ENCODE measurements at regions of chr11 and their contacts with region 1.

Region 1: DNA sequence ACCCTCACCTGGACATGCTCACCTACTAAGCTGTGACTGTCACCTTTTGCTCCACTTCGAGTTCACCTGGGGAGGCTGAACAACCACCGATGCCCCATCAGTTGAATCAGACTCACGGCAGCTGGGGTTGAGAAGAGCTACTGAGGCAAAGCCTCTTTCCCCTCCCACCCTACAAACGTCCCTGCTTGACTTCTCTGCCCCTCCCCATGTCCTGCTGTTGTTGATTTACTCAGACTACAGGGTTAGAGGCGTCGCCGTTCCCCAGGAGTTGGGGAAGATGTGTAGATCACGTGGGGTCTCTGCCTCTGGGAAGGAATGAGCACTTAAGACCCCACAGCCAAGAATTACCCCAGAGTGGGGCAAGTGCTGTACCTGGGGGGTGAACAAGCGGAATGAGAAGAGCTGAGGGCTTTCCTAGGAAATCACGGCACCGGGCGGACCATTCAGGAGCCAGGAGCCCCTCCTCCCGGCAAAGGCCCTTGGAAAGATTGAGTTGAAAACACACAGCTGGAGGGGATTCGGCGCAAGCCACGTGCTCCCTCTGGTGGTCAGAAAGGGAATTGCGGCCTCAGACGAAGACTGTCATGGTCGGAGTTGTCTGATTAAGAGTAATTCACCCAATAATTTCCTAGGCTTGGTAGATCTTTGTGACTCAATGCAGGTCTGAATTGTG is 7.0 kb downstream of the FXYD2 start:
- DNase-seq: peak; percentile 83
- H3K4me3 ChIP-seq: peak overlapping the region in 1 of 2 experiments; percentile 33; a peak in 1 of 4 replicates
- H3K27ac ChIP-seq: no peak overlapping the region
- H3K4me1 ChIP-seq: peaks cover 8 to 28% of the 10 kb centered on the region in 2 experiments; a peak in 2 of 4 replicates
- H3K27me3 ChIP-seq: no peaks in the 10 kb centered on the region
- CTCF ChIP-seq: peak; percentile 98
- EP300 ChIP-seq: no peak
- RAD21 ChIP-seq: peak; percentile 92

Region 2: DNA sequence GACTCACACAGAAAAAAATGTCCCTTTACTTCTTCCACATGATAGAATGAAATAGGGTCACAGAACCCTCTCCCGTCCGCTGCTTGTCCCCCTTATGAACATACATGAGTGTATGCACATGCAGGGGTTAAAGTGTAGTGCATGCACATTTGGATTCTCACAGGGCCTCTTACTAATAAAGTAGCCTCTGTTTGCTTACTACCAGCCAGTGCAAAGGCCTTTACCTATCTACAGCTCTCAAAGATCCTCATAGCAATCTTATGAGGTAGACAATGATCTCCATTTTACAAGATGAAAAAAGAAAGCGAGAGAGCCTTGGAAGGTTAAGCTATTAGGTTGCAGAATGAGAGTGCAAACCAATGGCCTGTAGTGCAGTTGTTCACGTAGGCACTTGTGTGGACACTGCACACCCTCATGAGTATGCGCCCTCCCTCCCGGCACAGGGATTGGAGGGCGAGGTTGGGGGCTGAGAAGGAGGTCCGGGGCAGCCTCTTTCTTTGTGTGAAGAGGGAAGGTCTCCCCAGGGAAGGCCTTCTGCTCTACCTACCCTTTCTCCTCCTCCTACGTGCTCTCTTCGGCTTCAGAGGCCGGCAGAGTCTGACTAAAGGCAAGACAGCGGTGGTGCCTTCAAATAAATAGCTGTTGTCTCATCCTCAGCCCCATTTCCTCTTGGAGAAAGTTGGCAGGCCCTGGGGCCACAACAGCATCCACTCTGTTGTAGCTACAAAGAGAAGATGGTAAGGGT is 398.6 kb before region 1 on chr11:
- CTCF ChIA-PET with region 1: interaction called, 431 read pairs
- POLR2A ChIA-PET with region 1: no interaction called
- DNase-seq: no peak
- H3K4me3 ChIP-seq: no peak overlapping the region
- H3K27ac ChIP-seq: no peak overlapping the region
- H3K4me1 ChIP-seq: no peaks in the 10 kb centered on the region
- H3K27me3 ChIP-seq: no peaks in the 10 kb centered on the region
- CTCF ChIP-seq: no peak
- EP300 ChIP-seq: no peak
- RAD21 ChIP-seq: no peak

Region 3: GRCh38 chr11:117560780-117561530 is 256.5 kb before region 1 on chr11:
- CTCF ChIA-PET with region 1: interaction called, 11 read pairs
- POLR2A ChIA-PET with region 1: no interaction called
- DNase-seq: no peak
- H3K4me3 ChIP-seq: no peak overlapping the region
- H3K27ac ChIP-seq: no peak overlapping the region
- H3K4me1 ChIP-seq: peaks cover 0 to 19% of the 10 kb centered on the region in 2 experiments; a peak in 2 of 4 replicates
- H3K27me3 ChIP-seq: peaks cover 8% of the 10 kb centered on the region; the same call in 1 of the 2 replicates
- CTCF ChIP-seq: no peak
- EP300 ChIP-seq: no peak
- RAD21 ChIP-seq: no peak

Region 4: GRCh38 chr11:117796872-117797529 is 20.5 kb before region 1 on chr11 and contains the start of gene DSCAML1:
- CTCF ChIA-PET with region 1: interaction called, 198 read pairs
- POLR2A ChIA-PET with region 1: no interaction called
- DNase-seq: peak; percentile 87
- H3K4me3 ChIP-seq: peak within 1 kb of the TSS in 1 of 2 experiments; percentile 34; a peak in 2 of 4 replicates
- H3K27ac ChIP-seq: no peak within 1 kb of the TSS
- H3K4me1 ChIP-seq: peaks cover 0 to 14% of the 10 kb centered on the region in 2 experiments; a peak in 1 of 4 replicates
- H3K27me3 ChIP-seq: peaks cover 35% of the 10 kb centered on the region
- CTCF ChIP-seq: no peak
- EP300 ChIP-seq: no peak
- RAD21 ChIP-seq: no peak
- polyA plus RNA-seq, gene DSCAML1: not detected in 2 replicates

Region 5: DNA sequence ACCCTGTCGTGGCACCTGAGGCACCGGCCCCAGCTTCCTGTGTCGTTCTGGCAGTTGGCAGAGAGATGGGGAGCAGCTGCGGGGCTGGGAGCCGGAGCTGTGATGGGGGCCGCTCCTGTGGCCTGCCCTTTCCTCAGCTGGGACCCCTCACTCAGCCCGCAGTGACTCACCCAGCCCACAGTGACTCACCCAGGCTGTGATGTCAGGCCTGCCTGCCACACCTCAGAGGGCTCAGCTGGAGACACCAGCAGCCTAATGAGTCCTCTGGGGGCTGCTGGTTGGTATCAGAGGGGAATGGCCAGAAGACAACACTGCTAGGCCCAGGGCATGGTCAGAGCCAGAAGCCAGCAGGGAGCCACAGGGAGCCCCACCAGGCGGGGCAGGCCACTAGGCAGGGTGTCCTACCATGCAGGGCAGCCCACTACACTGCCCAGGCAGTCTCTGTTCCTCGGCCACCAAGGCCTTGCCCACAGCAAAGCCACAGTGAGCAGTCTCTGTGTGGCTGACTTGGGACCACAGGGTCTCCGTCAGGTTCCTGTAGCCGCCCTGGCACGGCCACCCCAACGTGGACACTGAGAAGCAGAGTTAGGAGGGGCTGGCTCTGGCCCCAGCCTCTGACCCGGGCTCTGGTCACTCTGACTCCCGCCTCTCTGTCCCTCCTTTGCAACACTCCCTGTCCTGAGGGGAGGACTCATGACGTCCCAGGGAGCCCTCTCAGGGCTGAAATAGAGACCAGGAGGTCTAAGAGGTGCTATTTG is 11.3 kb after region 1 on chr11:
- CTCF ChIA-PET with region 1: interaction called, 35 read pairs
- POLR2A ChIA-PET with region 1: no interaction called
- DNase-seq: no peak
- H3K4me3 ChIP-seq: no peak overlapping the region
- H3K27ac ChIP-seq: no peak overlapping the region
- H3K4me1 ChIP-seq: peaks cover 0 to 6% of the 10 kb centered on the region in 2 experiments; a peak in 2 of 4 replicates
- H3K27me3 ChIP-seq: peaks cover 9% of the 10 kb centered on the region; the same call in 1 of the 2 replicates
- CTCF ChIP-seq: no peak
- EP300 ChIP-seq: no peak
- RAD21 ChIP-seq: no peak

Region 6: GRCh38 chr11:117932067-117932370 is 114.5 kb after region 1 on chr11:
- CTCF ChIA-PET with region 1: interaction called, 10 read pairs
- POLR2A ChIA-PET with region 1: no interaction called
- DNase-seq: no peak
- H3K4me3 ChIP-seq: no peak overlapping the region
- H3K27ac ChIP-seq: no peak overlapping the region
- H3K4me1 ChIP-seq: peaks cover 0 to 5% of the 10 kb centered on the region in 2 experiments; a peak in 1 of 4 replicates
- H3K27me3 ChIP-seq: peaks cover 7% of the 10 kb centered on the region; the same call in 1 of the 2 replicates
- CTCF ChIP-seq: no peak
- EP300 ChIP-seq: no peak
- RAD21 ChIP-seq: no peak

Region 7: GRCh38 chr11:119306373-119306890 is 1488.9 kb after region 1 on chr11:
- CTCF ChIA-PET with region 1: no interaction called
- POLR2A ChIA-PET with region 1: no interaction called
- DNase-seq: no peak
- H3K4me3 ChIP-seq: no peak overlapping the region
- H3K27ac ChIP-seq: no peak overlapping the region; a peak in 1 of 4 replicates
- H3K4me1 ChIP-seq: no peaks in the 10 kb centered on the region
- H3K27me3 ChIP-seq: no peaks in the 10 kb centered on the region
- CTCF ChIP-seq: no peak
- EP300 ChIP-seq: no peak
- RAD21 ChIP-seq: no peak

Measured in SK-N-SH (cell line).